CD8-positive, alpha-beta T cell (primary cell): ENCODE measurements at regions of chr11 and their contacts with region 1.

Region 1: GRCh38 chr11:46700241-46701077 is at the starts of genes ARHGAP1 and ZNF408:
- DNase-seq: peak; percentile 98 to 100 (median 99)
- ATAC-seq: peak; percentile 97
- H3K4me3 ChIP-seq: peak within 1 kb of the TSS; percentile 79 to 92
- H3K4me3 Mint-ChIP-seq: peak within 1 kb of the TSS; percentile 99
- H3K27ac ChIP-seq: peak within 1 kb of the TSS; percentile 73 to 82
- H3K27ac Mint-ChIP-seq: peak within 1 kb of the TSS; percentile 96
- H3K4me1 ChIP-seq: peaks cover 57% of the 10 kb centered on the region
- H3K4me1 Mint-ChIP-seq: peaks cover 53% of the 10 kb centered on the region
- H3K27me3 ChIP-seq: no peaks in the 10 kb centered on the region
- H3K27me3 Mint-ChIP-seq: no peaks in the 10 kb centered on the region
- CTCF ChIP-seq: no peak
- total RNA-seq, gene ARHGAP1: 33.4 to 36.9 TPM
- total RNA-seq, gene ZNF408: 24.0 to 24.3 TPM

Region 2: DNA sequence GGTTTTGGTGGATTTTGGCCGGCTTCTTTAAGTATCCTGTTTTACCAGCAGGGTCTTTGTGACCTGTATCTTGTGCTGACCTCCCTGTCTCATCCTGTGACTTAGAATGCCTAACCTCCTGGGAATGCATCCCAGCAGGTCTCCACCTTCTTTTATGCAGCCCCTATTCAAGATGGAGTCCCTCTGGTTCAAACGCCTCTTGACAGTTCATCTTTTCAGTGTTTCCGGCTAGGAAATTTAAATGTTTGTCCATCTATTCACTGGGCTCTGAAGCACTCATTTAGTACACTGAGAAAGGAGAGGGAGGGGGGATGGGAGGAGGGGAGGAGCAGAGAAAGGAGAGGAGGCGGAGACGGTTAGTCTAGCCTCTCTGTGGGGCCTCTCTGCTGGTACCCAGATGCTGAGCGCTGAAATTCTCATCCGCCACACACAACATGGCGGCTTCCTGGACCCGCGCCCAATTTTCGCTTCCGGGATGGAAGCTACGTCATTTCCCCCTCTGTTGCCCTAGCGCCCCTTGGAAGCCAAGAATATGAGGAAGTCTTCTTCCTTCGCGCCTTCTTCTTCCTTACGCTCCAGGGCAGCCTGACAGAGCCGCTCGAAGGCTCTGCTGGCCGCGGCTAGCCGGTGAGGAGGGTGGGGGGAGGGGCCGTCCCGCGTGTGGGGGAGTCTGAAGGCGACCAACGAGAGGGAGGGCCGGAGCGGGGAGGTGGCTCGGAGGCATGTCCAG is 1345.3 kb before region 1 on chr11:
- CTCF ChIA-PET with region 1: no interaction called
- POLR2A ChIA-PET with region 1: no interaction called
- intact Hi-C with region 1: loop called in 1 of 2 experiments (anchors 5 kb)
- DNase-seq: peak; percentile 80 to 95 (median 89)
- ATAC-seq: peak; percentile 96
- H3K4me3 ChIP-seq: peak overlapping the region; percentile 66 to 72
- H3K4me3 Mint-ChIP-seq: peak overlapping the region; percentile 80
- H3K27ac ChIP-seq: peak overlapping the region; percentile 48 to 68
- H3K27ac Mint-ChIP-seq: peak overlapping the region; percentile 80
- H3K4me1 ChIP-seq: peaks cover 13% of the 10 kb centered on the region
- H3K4me1 Mint-ChIP-seq: peaks cover 14% of the 10 kb centered on the region
- H3K27me3 ChIP-seq: no peaks in the 10 kb centered on the region
- H3K27me3 Mint-ChIP-seq: peaks cover 5% of the 10 kb centered on the region
- CTCF ChIP-seq: no peak

Region 3: DNA sequence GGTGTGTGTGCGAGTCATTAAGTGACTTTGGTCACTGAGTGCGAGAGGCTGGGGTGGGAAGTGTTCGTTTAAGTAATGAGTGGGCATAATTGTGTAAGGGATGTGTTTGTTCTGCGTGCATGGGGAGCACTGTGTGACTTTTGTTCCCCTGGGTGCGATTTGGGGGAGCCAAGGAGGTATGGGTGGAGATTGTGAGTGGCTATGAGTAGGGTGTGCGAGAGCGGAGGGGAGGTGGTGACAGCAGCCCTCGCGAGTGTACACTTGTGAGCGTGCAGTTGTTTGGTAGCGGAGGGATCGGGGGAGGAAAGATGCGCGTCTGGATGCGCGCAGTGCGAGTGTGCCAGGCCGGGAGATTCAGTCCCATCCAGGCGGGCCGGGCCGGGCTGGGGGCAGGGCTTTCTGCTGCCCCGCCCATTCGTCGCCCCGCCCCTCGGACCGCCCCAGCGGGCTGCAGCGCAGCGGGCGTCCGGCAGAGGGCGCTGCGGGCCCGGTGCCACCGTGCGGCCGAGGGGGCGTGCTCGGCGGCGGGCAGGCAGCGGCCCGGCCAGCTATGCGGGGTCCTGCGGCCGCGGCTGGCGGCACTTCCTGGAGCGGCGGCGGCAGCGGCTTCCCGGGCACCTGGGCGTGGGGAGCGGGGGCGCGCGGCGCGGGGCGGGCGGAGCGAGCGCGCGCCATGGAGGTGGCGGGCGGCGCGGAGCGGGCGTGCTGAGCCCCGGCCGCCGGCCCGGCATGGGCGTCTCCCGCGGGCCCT is 353.4 kb before region 1 on chr11 and contains the start of gene DGKZ:
- CTCF ChIA-PET with region 1: no interaction called
- POLR2A ChIA-PET with region 1: no interaction called
- intact Hi-C with region 1: loop called in 1 of 2 experiments (anchors 5 kb)
- DNase-seq: peak; percentile 83 to 96 (median 87)
- ATAC-seq: peak; percentile 80
- H3K4me3 ChIP-seq: peak within 1 kb of the TSS; percentile 72 to 94
- H3K4me3 Mint-ChIP-seq: peak within 1 kb of the TSS; percentile 90
- H3K27ac ChIP-seq: peak within 1 kb of the TSS; percentile 55 to 68
- H3K27ac Mint-ChIP-seq: peak within 1 kb of the TSS; percentile 90
- H3K4me1 ChIP-seq: peaks cover 72% of the 10 kb centered on the region
- H3K4me1 Mint-ChIP-seq: peaks cover 79% of the 10 kb centered on the region
- H3K27me3 ChIP-seq: no peaks in the 10 kb centered on the region
- H3K27me3 Mint-ChIP-seq: no peaks in the 10 kb centered on the region
- CTCF ChIP-seq: peak; percentile 55
- total RNA-seq, gene DGKZ: 131 to 135 TPM

Region 4: DNA sequence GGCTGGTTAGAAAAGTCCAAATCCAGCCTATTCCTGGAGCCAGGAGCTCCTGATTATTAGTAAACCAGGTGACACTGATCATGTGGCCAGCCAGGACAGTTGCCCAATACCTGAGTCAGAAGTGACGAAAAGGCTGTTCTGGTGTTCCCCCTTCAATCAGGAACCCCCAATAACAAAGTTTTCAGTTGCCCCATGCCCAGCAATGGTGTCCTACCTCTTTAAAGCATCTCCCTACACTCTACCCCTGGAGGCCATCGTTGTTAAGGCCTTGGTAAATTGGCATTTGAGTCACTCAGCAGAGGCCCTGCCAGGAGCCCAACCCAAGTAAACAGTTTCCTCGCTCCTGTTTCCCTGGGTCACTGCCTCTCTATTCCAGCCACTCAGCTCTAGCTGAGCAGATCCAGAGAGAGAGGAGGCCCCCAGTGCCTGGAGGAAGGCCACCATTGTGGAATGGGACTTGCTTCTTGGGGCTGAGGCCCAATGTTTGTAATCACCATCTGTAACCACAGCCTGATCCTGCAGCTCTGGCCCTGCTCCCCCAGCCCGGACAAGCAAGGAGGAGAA is 25.1 kb before region 1 on chr11:
- CTCF ChIA-PET with region 1: interaction called, 43 read pairs
- POLR2A ChIA-PET with region 1: interaction called, 27 read pairs
- intact Hi-C with region 1: loop called in 1 of 2 experiments (anchors 1 kb)
- DNase-seq: no peak
- ATAC-seq: no peak
- H3K4me3 ChIP-seq: no peak overlapping the region
- H3K4me3 Mint-ChIP-seq: no peak overlapping the region
- H3K27ac ChIP-seq: peak overlapping the region in 1 of 2 experiments; percentile 61
- H3K27ac Mint-ChIP-seq: peak overlapping the region; percentile 87
- H3K4me1 ChIP-seq: peaks cover 67% of the 10 kb centered on the region
- H3K4me1 Mint-ChIP-seq: peaks cover 68% of the 10 kb centered on the region
- H3K27me3 ChIP-seq: no peaks in the 10 kb centered on the region
- H3K27me3 Mint-ChIP-seq: no peaks in the 10 kb centered on the region
- CTCF ChIP-seq: no peak

Region 5: GRCh38 chr11:47176328-47177228 is 476.1 kb after region 1 on chr11 and contains the start of gene ARFGAP2:
- CTCF ChIA-PET with region 1: no interaction called
- POLR2A ChIA-PET with region 1: no interaction called
- intact Hi-C with region 1: loop called (anchors 1 to 5 kb)
- DNase-seq: peak; percentile 93 to 98 (median 96)
- ATAC-seq: peak; percentile 91
- H3K4me3 ChIP-seq: peak within 1 kb of the TSS; percentile 97 to 100
- H3K4me3 Mint-ChIP-seq: peak within 1 kb of the TSS; percentile 94
- H3K27ac ChIP-seq: peak within 1 kb of the TSS; percentile 95 to 98
- H3K27ac Mint-ChIP-seq: peak within 1 kb of the TSS; percentile 98
- H3K4me1 ChIP-seq: peaks cover 28% of the 10 kb centered on the region
- H3K4me1 Mint-ChIP-seq: peaks cover 41% of the 10 kb centered on the region
- H3K27me3 ChIP-seq: no peaks in the 10 kb centered on the region
- H3K27me3 Mint-ChIP-seq: no peaks in the 10 kb centered on the region
- CTCF ChIP-seq: no peak
- total RNA-seq, gene ARFGAP2: 194 to 215 TPM

Region 6: GRCh38 chr11:47538741-47539574 is 838.5 kb after region 1 on chr11:
- CTCF ChIA-PET with region 1: no interaction called
- POLR2A ChIA-PET with region 1: no interaction called
- intact Hi-C with region 1: no loop called
- DNase-seq: no peak
- ATAC-seq: no peak
- H3K4me3 ChIP-seq: no peak overlapping the region
- H3K4me3 Mint-ChIP-seq: no peak overlapping the region
- H3K27ac ChIP-seq: no peak overlapping the region
- H3K27ac Mint-ChIP-seq: peak overlapping the region; percentile 33
- H3K4me1 ChIP-seq: peaks cover 58% of the 10 kb centered on the region
- H3K4me1 Mint-ChIP-seq: peaks cover 76% of the 10 kb centered on the region
- H3K27me3 ChIP-seq: no peaks in the 10 kb centered on the region
- H3K27me3 Mint-ChIP-seq: no peaks in the 10 kb centered on the region
- CTCF ChIP-seq: no peak

Region 7: GRCh38 chr11:47578524-47579460 is 878.3 kb after region 1 on chr11 and contains the starts of genes KBTBD4 and NDUFS3:
- CTCF ChIA-PET with region 1: no interaction called
- POLR2A ChIA-PET with region 1: interaction called, 3 read pairs
- intact Hi-C with region 1: loop called in 1 of 2 experiments (anchors 2 kb)
- DNase-seq: peak; percentile 74 to 95 (median 89)
- ATAC-seq: peak; percentile 94
- H3K4me3 ChIP-seq: peak within 1 kb of the TSS; percentile 90 to 92
- H3K4me3 Mint-ChIP-seq: peak within 1 kb of the TSS; percentile 99
- H3K27ac ChIP-seq: peak within 1 kb of the TSS; percentile 76 to 84
- H3K27ac Mint-ChIP-seq: peak within 1 kb of the TSS; percentile 97
- H3K4me1 ChIP-seq: peaks cover 31% of the 10 kb centered on the region
- H3K4me1 Mint-ChIP-seq: peaks cover 54% of the 10 kb centered on the region
- H3K27me3 ChIP-seq: no peaks in the 10 kb centered on the region
- H3K27me3 Mint-ChIP-seq: no peaks in the 10 kb centered on the region
- CTCF ChIP-seq: no peak
- total RNA-seq, gene KBTBD4: 31.8 to 32.6 TPM
- total RNA-seq, gene NDUFS3: 159 to 179 TPM